ENCODE measurements at regions of chr13 and their contacts with region 1.

Region 1: DNA sequence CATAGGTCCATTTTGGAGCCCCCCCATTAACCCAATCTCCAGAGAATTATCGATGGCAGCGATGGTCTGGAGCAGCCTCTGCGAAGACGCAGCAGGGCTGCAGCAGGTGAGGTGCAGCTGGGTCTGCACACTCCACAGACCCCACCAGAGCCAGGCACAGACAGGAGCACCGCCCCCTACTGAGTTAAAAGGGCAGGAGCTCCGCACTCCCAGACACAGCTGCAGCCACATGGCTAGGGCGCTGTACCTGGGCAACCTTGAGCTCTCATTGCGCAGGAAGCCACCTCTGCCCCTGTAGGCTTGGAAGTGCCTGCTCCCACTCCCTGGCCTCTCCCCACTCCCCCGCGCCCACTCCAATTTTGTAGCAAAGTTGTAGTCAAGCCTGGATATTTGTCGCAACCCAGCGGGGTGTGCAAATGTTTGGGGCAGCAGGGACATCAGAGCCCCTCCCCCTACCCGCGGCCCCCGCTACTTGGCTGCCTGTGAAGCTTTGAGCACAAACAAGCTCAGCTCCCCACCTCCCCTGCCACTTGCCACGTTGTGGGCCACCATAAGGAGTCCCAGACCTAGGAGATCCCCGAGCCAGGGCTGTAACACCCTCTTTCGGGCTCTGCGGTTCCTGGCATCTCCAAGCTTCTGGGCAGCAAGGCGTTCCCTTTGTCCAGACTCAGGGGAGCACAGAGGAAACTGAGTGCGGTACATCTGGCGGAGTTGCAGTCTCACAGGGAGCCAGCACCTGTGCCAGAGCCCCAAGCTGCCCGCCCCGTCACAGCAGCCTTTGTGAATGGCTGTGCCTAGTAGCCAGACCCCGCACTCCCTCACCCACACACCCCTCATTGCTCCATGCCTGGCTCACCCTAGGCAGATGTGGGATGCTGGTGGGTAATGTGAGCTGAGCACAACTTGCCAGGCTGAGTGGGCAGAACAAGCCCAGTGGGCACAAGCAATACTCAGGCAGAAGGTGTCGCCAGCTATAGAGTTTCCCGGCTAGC is 949.7 kb upstream of the SLITRK1 start:
- DNase-seq: no peak

Region 2: GRCh38 chr13:83009987-83010386 is 1822.0 kb before region 1 on chr13:
- intact Hi-C with region 1: loop called in 1 of 2 experiments (anchors 10 kb)
- DNase-seq: no peak

Region 3: DNA sequence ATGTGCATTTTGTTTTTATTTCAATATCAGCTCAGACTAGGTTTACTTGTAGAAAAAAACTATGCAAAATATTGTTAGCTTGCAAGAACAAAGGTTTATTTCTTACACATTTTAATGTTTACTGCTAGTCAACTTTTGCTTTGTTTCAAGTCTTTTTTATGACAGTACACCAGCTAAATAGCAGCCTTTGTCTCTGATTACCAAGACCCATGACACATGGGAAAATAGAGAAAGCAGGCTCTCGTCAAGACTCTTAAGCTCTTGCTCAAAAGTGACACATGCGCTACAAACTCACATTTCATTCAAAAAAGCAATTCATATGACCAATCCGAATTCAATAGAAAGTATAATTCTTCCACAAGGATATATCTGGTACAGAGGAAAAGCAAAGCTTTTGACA is 307.4 kb before region 1 on chr13:
- intact Hi-C with region 1: no loop called
- DNase-seq: no peak

Region 4: GRCh38 chr13:84865783-84866221 is 33.8 kb after region 1 on chr13:
- intact Hi-C with region 1: no loop called
- DNase-seq: no peak

Measured in posterior vena cava (tissue), 2 donors.